Astrocyte of the cerebellum (primary cell): ENCODE measurements at regions of chr19 and their contacts with region 1.

Region 1: GRCh38 chr19:3620145-3620816 is 6.3 kb downstream of the CACTIN start:
- DNase-seq: no peak
- H3K4me3 ChIP-seq: no peak overlapping the region
- CTCF ChIP-seq: no peak

Region 2: DNA sequence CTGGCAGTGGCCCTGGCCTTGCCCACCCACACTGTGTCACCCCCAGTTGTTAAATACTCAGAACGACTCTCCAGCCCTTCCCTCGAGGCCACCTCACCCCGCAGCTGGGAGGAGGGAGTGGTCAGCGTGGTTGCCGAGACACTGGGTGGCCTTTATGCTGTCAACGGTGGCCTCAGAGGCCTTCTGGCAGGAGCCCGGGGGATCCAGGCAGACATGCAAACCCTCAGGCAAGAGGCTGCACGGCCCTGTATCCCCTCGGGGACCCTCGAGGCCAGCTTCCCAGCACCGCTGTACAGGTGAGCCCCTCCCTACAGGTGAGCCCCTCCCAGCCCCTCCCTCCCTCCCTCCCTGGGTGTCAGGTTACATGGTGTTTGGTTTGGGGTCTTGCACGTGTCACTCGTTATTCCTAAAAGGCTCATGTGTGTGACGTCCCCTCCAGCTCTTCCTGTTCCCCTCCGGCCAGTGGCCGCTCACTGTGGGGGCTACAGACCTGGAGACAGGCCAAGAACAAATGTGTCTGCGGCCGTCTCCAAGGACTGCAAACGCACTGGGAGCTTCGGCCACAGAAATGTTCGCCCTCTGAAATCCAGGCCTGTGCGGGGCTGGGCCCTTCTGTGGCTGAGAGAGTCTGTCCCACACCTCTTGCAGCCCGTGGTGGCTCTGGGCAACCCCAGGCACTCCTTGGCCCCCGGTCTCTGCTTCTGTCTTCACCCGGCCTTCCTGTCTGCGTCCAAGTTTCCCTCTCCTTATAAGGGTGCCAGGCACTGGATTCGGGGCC is 81.1 kb before region 1 on chr19 and contains the start of gene TEKTIP1:
- in situ Hi-C with region 1: loop called (anchors 5 kb)
- DNase-seq: no peak
- H3K4me3 ChIP-seq: no peak within 1 kb of the TSS
- CTCF ChIP-seq: no peak

Region 3: DNA sequence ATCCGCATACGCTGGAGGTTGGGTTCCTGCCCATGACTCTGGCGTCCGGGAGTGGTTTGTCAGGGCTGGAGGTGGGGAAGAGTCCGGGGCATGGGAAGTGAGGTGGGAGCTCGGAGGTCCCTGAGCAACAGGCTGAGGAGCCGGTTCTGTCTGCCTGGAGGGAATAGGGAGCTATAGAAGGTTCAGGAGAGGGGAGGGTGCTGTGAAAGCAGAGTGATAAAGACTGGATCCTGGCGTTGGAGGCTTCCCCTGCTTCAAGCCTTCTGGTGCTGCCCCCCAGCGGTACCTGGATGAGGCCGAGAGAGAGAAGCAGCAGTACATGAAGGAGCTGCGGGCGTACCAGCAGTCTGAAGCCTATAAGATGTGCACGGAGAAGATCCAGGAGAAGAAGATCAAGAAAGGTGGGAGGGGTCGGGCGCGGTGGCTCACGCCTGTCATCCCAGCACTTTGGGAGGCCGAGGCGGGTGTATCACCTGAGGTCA is 45.0 kb before region 1 on chr19:
- in situ Hi-C with region 1: loop called (anchors 5 kb)
- DNase-seq: no peak
- H3K4me3 ChIP-seq: no peak overlapping the region
- CTCF ChIP-seq: peak; percentile 34